Lower leg skin (tissue), 4 donors: ENCODE measurements at regions of chr20 and their contacts with region 1.

Region 1: DNA sequence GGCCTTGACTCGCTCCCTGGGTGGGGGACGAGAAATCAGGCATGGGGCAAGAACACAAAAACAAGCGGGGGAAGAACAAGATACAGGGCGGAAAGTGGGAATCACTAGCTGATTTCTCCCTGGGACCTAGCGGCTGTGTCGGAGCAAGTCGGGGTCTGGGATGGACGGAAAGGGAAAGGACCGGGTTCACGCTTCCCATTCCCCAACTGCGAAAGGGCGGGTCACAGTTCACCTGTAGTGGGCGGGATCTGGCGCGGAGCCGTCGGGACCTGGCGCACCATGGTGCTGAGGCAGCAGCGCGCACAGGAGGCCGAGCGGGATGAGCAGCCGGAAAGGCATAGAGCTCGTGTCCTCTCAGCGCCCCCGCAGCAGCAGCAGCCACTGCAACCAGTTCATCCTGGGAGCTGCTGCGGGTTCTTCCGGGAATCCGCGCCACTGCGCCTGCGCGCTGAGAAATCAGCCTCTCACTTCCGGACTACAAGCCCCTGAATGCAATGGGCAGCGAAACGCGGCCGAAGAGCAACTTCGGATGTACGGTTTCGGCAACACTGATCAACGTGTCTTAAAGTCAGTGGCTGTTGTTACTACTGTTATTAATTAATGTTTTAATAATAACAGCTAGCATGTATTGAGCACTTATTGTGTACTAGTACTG is at the start of gene EDEM2:
- DNase-seq: peak; percentile 91 to 98
- H3K4me3 ChIP-seq: peak within 1 kb of the TSS; percentile 56
- CTCF ChIP-seq: peak in 1 of 3 donors; percentile 25
- POLR2A ChIP-seq: peak in 1 of 2 donors; percentile 20
- total RNA-seq, gene EDEM2: 8.8 to 18.7 (median 16.6) TPM

Region 2: DNA sequence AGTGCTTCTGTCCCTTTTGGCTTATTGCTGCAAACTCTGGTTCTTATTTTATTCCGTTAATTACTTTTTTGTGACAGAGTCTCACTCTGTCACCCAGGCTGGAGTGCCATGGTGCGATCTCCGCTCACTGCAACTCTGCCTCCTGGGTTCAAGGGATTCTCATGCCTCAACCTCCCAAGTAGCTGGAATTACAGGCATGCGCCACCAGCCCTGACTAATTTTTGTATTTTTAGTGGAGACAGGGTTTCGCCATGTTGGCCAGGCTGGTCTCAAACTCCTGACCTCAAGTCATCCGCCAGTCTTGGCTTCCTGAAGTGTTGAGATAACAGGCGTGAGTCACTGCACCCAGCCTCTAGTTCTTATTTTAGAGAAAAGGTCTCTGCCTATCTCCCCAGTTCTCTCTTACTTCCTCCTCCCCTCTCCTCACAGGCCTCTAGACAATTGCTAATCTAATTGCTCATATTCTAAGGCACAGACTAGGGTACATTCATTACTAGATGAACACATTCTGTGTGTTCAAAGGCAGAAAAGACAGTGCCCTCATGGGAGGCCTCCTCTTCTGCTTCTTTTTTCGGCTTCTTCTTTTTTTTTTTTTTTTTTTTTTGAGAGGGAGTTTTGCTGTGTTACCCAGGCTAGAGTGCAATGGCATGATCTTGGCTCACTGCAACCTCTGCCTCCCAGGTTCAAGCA is 26.9 kb before region 1 on chr20:
- intact Hi-C with region 1: no loop called
- DNase-seq: peak in 1 of 2 donors; percentile 48
- H3K4me3 ChIP-seq: no peak overlapping the region
- CTCF ChIP-seq: no peak
- POLR2A ChIP-seq: no peak

Region 3: GRCh38 chr20:35215066-35215956 is 68.3 kb after region 1 on chr20:
- intact Hi-C with region 1: loop called (anchors 10 kb)
- DNase-seq: no peak
- H3K4me3 ChIP-seq: no peak overlapping the region
- CTCF ChIP-seq: no peak
- POLR2A ChIP-seq: no peak

Region 4: DNA sequence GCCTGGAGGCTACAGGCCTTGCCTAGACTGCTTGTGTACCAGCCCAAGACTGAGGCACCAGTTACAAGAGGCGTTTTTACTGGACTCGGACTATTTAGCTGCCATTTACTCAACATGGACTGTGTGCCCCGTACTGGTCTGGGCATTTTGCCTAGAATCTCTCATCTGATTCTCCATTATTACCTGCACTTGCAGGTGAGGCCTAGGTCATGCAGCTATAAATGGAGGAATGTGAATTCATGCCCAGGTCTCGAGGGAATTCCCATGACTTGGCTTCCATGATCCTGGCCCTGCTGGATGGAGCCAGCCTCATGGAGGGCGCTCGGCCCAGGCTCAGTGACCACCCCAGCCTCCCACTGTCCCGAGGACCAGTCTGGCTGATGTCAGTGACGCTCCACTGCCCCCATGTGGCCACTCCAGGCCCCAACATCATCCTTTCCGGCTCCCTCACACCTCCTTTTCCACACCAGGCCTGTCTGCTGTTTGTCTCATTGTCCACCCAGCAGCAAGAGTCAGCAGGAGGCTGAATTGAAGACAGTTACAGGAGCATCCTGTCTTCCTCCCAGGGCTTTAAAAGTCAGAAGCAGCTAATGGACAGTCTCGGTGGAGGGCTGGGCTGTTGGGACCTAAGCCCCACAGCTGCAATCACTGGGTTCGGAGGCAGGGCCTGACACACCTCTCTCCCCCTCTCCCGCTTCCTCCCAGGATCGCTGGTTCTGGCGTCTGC is 122.2 kb after region 1 on chr20:
- intact Hi-C with region 1: loop called (anchors 10 kb)
- DNase-seq: no peak
- H3K4me3 ChIP-seq: no peak overlapping the region
- CTCF ChIP-seq: peak in 1 of 3 donors; percentile 27
- POLR2A ChIP-seq: no peak